ENCODE measurements at regions of chr12 and their contacts with region 1.

Region 1: DNA sequence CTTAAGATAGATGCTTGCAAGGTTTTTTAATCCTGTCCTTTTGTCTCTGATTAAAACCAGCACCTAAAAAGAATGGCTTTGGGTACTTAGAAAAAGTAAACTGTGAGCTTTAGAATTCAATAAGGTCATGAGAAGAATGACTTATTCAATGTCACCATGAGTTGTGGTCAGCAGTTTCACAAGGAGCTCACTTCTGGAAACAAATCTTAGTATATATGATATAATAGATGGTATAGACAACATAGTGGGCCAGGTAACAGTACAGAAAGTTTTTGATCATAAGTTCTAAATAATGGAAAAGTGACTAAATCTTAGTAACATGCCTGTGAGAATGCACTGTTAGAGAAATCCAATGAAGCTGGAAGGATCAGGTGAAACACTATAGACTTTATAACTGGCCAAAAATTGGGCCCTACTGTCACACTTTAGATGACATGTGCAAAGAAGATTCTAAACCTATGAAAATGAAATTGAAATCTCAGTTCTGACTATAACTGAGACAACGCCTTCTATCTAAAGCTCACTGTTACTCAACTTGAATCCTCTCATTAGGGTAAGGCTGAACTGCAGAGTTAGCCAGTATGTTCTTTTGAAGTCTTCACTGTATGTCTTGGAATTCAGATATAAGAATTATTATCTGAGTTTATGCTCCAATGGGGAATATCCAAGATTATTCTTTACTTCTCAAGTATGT is 42.4 kb upstream of the RAD51AP1 start:
- DNase-seq: no peak
- H3K4me3 ChIP-seq: no peak overlapping the region
- H3K27ac ChIP-seq: no peak overlapping the region
- H3K4me1 ChIP-seq: no peaks in the 10 kb centered on the region
- H3K27me3 ChIP-seq: no peaks in the 10 kb centered on the region
- CTCF ChIP-seq: no peak

Region 2: DNA sequence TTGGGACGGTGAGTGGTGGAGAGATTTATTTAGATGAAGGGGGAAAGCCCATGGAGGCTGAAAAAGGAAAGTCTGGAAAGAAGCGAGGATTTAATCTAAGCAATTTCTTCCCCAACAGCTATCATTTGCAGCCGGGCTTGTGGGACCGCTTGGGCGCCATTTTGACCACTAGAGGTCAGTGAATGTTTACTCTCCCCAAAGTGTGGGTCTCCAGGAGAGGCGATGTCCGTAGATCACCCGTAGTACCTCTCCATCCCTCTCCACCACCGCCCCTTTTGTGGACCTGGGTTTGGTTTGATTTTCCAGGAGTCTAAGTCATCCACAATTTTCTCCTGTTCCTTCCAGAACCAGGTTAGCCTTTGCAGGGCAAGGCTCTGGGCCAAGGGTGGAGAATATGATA is 531.9 kb before region 1 on chr12:
- intact Hi-C with region 1: loop called (anchors 10 kb)
- DNase-seq: peak in 2 of 5 donors; percentile 20 to 44
- H3K4me3 ChIP-seq: no peak overlapping the region
- H3K27ac ChIP-seq: no peak overlapping the region
- H3K4me1 ChIP-seq: no peaks in the 10 kb centered on the region
- H3K27me3 ChIP-seq: no peaks in the 10 kb centered on the region
- CTCF ChIP-seq: no peak

Region 3: DNA sequence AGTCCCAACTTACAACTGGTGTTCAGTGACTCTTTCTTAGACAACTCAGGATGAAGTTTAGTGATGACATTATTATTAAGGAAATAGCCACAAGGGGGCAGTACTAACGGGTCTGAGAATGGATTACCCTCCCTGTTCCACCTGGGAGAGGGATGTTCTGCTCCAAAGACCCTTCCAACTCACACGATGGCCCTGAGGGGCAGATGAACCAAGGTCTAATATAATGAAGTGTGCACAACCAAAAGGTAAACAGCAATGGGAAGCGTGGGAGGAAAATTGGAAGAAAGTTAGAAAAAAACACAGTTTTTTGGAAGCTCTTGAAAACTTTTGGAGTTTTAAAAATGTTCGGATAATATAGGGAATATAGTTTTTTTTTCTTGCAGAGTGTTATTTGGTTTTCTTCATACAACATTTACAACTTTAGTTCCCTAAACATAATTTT is 74.7 kb before region 1 on chr12:
- intact Hi-C with region 1: no loop called
- DNase-seq: peak in 2 of 5 donors; percentile 48 to 63
- H3K4me3 ChIP-seq: no peak overlapping the region
- H3K27ac ChIP-seq: no peak overlapping the region
- H3K4me1 ChIP-seq: no peaks in the 10 kb centered on the region
- H3K27me3 ChIP-seq: no peaks in the 10 kb centered on the region
- CTCF ChIP-seq: peak; percentile 43

Region 4: GRCh38 chr12:5033883-5034282 is 537.6 kb after region 1 on chr12:
- intact Hi-C with region 1: no loop called
- DNase-seq: no peak
- H3K4me3 ChIP-seq: no peak overlapping the region
- H3K27ac ChIP-seq: no peak overlapping the region
- H3K4me1 ChIP-seq: peaks cover 0 to 2% (median 0%) of the 10 kb centered on the region in 3 donors
- H3K27me3 ChIP-seq: no peaks in the 10 kb centered on the region
- CTCF ChIP-seq: no peak